GM10248 (cell line): ENCODE measurements at regions of chr12 and their contacts with region 1.

Region 1: GRCh38 chr12:121793838-121794533 is 498 bp upstream of the RHOF start:
- DNase-seq: peak; percentile 88
- CTCF ChIP-seq: peak; percentile 100

Region 2: DNA sequence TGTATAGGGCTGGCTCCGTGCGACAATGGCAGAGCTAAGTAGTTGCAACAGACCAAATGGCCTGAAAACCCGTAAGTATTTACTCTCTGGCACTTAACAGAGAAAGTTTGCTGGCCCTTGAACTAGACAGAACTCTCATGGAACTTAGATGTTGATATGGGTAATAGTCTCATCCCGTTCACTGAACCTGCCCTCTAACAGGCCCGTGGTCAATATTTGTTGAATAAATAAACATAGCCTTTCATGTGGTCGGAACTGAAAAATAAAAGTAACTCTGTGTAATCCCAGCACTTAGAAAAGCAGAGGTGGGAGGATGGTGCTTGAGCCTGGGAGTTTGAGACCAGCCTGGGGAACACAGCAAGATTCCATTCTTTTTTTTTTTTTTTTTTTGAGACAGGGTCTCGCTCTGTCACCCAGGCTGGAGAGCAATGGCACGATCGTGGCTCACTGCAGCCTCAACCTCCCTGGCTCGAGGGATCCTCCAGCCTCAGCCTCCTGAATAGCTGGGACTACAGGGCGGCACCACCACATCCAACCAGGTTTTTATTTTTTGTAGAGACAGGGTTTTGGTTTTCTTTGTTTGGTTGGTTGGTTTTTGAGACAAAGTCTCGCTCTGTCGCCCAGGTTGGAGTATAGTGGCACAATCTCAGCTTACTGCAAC is 242.9 kb before region 1 on chr12:
- CTCF ChIA-PET with region 1: interaction called, 10 read pairs
- POLR2A ChIA-PET with region 1: no interaction called
- DNase-seq: no peak
- CTCF ChIP-seq: no peak

Region 3: DNA sequence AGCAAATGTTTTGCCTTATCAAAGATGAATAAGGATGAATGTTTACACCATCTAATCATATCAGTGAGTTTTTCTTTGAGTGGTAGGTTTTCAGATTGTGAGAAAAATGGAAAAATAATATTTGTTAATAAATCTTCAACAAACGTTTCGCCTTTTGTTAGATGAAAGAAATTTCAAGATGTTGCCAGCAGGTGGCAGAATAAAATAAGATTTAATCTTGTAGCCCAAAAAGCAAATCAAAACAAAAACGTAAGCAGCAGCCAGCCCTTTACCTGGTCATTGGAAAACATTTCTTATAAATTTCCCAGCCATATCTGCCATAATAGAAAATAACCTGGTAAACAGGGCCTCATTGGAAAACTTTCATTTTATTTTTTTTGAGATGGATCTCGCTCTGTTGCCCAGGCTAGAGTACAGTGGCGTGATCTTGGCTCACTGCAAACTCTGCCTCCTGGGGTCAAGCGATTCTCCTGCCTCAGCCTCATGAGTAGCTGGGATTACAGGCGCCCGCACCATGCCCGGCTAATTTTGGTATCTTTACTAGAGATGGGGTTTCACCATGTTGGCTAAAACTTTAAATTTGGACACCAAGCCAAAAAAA is 96.8 kb before region 1 on chr12:
- CTCF ChIA-PET with region 1: interaction called, 36 read pairs
- POLR2A ChIA-PET with region 1: interaction called, 4 read pairs
- DNase-seq: peak; percentile 69
- CTCF ChIP-seq: peak; percentile 44

Region 4: GRCh38 chr12:121765573-121765972 is 28.4 kb before region 1 on chr12:
- CTCF ChIA-PET with region 1: interaction called, 533 read pairs
- POLR2A ChIA-PET with region 1: no interaction called
- DNase-seq: no peak
- CTCF ChIP-seq: no peak

Region 5: GRCh38 chr12:121829250-121829918 is 35.4 kb after region 1 on chr12:
- CTCF ChIA-PET with region 1: interaction called, 16 read pairs
- POLR2A ChIA-PET with region 1: interaction called, 3 read pairs
- DNase-seq: no peak
- CTCF ChIP-seq: no peak

Region 6: GRCh38 chr12:121883315-121883660 is 89.3 kb after region 1 on chr12:
- CTCF ChIA-PET with region 1: interaction called, 102 read pairs
- POLR2A ChIA-PET with region 1: interaction called, 4 read pairs
- DNase-seq: no peak
- CTCF ChIP-seq: no peak

Region 7: GRCh38 chr12:121992059-121992879 is 198.3 kb after region 1 on chr12:
- CTCF ChIA-PET with region 1: interaction called, 10 read pairs
- POLR2A ChIA-PET with region 1: no interaction called
- DNase-seq: peak; percentile 84
- CTCF ChIP-seq: no peak